ENCODE measurements at regions of chr11 and their contacts with region 1.

Region 1: DNA sequence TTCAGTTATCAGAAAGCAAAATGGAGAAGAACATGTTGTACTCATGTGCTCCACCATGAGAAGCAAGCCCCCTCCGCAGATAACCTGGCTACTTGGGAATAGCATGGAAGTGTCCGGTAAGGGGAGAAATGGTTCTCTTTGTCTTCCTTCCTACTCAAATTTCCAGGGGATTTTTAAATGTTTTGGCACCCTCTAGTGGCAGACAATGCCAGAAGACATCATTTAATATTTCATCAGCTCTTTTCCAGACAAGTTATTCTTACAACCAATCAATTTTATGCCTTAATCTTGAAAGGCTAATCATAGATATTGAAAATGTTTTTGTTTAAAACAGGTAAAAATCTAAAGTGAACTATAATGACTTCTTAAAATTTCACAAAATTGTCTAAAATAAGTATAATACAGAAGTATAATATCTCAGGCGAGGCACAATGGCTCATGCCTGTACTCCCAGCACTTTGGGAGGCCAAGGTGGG is 15.7 kb downstream of the CRTAM start:
- DNase-seq: peak; percentile 36 to 69 (median 46)
- ATAC-seq: peak; percentile 80
- H3K4me3 ChIP-seq: no peak overlapping the region
- H3K27ac ChIP-seq: no peak overlapping the region
- H3K4me1 ChIP-seq: no peaks in the 10 kb centered on the region; a peak in 1 of 5 replicates
- H3K27me3 ChIP-seq: no peaks in the 10 kb centered on the region; a peak in 2 of 5 replicates
- CTCF ChIP-seq: peak; percentile 45 to 81 (median 50); a peak in 5 of 6 replicates
- EP300 ChIP-seq: no peak
- POLR2A ChIP-seq: no peak
- RAD21 ChIP-seq: peak; percentile 39 to 76

Region 2: DNA sequence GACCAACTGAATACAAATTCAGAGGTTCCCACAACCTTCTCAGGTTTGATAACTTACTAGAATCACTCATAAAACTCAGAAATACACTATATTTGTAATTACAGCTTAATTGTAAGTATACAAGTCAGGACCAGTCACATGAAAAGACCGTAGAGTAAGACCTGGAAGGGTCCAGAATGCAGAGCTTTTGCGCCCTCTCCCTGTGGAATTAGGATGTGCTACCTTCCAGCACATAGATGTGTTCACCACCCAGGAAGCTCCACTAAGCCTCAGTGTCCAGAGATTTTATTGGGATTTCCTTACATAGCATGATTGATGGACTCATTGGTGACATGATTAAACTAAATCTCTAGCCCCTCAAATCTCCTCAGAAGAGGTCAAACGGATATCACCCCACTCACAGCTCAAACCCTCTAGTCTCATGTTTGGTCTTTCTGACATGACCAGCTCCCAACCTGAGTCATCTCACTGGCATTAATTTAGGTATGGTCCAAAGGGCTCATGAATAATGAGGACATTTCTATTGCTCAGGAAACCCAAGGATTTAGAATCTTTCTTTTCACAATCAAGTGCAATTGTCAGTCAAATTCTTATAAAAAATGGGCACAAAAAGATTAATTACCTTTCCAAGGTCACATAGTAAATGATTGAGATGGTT is 275.7 kb before region 1 on chr11:
- CTCF ChIA-PET with region 1: interaction called, 11 read pairs
- POLR2A ChIA-PET with region 1: no interaction called
- in situ Hi-C with region 1: no loop called
- intact Hi-C with region 1: loop called (anchors 1 kb)
- DNase-seq: peak in 1 of 4 experiments; percentile 23
- ATAC-seq: peak; percentile 84
- H3K4me3 ChIP-seq: no peak overlapping the region
- H3K27ac ChIP-seq: no peak overlapping the region
- H3K4me1 ChIP-seq: no peaks in the 10 kb centered on the region
- H3K27me3 ChIP-seq: no peaks in the 10 kb centered on the region
- CTCF ChIP-seq: peak; percentile 31 to 46 (median 36); a peak in 3 of 6 replicates
- EP300 ChIP-seq: no peak
- POLR2A ChIP-seq: no peak
- RAD21 ChIP-seq: peak in 1 of 2 experiments; percentile 30; a peak in 1 of 4 replicates

Region 3: DNA sequence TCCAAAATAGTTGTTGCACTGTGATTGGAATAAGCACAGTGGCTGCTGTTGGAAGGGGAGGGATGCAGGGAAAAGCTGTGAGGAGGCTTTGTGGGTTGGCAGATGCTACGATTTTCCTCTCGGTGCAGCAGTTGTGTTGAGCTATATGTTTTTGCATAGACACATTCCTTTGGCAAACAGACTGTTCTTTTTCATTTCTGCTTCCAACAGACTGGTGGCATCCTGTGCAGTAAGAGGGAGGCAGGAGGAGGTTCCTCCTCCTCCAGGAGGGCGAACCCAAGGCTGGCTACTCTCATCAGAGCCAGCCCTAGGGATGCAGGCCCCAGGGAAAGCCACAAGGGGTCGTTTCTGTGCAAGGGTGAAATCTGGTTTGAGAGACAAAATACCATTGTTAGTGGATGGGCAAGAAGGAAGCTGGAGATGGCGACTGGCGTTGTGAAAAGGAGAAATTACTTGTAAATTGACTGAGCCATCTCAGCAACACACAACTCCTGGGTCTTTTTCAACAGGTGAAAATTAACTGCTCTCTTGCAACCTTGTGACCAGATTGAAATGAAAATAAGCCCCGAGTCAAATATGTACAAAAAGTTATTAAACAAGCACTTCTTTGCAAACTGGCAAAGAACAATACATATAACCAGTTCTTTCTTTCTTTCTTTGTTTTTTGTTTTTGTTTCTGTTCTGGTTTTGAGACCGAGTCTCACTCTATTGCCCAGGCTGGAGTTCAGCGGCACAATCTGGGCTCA is 225.0 kb before region 1 on chr11:
- CTCF ChIA-PET with region 1: interaction called, 7 read pairs
- POLR2A ChIA-PET with region 1: no interaction called
- in situ Hi-C with region 1: no loop called
- intact Hi-C with region 1: loop called (anchors 2 kb)
- DNase-seq: peak; percentile 37 to 59 (median 46)
- ATAC-seq: peak; percentile 93
- H3K4me3 ChIP-seq: no peak overlapping the region
- H3K27ac ChIP-seq: no peak overlapping the region
- H3K4me1 ChIP-seq: no peaks in the 10 kb centered on the region
- H3K27me3 ChIP-seq: peaks cover 0 to 4% of the 10 kb centered on the region in 2 experiments; a peak in 1 of 5 replicates
- CTCF ChIP-seq: peak; percentile 71 to 75 (median 74)
- EP300 ChIP-seq: no peak
- POLR2A ChIP-seq: no peak
- RAD21 ChIP-seq: peak; percentile 44 to 61

Region 4: DNA sequence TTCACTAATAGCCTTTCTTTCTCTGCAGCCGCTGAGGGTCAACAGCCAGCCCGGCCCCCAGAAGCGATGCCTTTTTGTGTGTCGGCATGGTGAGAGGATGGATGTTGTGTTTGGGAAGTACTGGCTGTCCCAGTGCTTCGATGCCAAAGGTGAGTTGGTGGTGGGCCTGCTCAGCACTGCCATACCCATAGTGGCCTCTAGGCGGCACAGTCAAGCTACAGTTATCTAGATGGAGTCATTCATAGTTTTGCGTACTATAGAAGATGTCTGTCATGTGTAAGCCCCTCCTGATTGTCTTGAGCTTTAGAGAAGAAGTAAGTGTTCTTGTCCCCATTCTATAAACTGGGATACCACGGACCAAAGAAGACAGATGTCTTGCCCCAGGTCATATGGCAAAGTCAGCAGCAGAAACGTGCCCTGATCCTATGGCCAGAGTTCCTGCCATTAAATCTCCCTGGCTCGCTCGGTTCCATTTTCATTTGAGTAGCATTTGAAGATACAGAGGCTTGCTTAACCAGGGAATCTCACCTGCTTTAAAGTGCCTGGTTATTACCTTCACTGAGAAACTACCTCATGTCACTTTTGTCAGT is 57.8 kb before region 1 on chr11:
- CTCF ChIA-PET with region 1: no interaction called
- POLR2A ChIA-PET with region 1: no interaction called
- in situ Hi-C with region 1: no loop called
- intact Hi-C with region 1: loop called (anchors 5 kb)
- DNase-seq: peak; percentile 37 to 68 (median 52)
- ATAC-seq: peak; percentile 90
- H3K4me3 ChIP-seq: no peak overlapping the region
- H3K27ac ChIP-seq: no peak overlapping the region
- H3K4me1 ChIP-seq: no peaks in the 10 kb centered on the region
- H3K27me3 ChIP-seq: peaks cover 0 to 3% of the 10 kb centered on the region in 2 experiments; a peak in 2 of 5 replicates
- CTCF ChIP-seq: peak; percentile 54 to 80 (median 69)
- EP300 ChIP-seq: no peak
- POLR2A ChIP-seq: no peak
- RAD21 ChIP-seq: no peak; a peak in 1 of 4 replicates

Region 5: GRCh38 chr11:122951211-122951610 is 97.2 kb after region 1 on chr11:
- CTCF ChIA-PET with region 1: no interaction called
- POLR2A ChIA-PET with region 1: no interaction called
- in situ Hi-C with region 1: no loop called
- intact Hi-C with region 1: no loop called
- DNase-seq: no peak
- ATAC-seq: no peak
- H3K4me3 ChIP-seq: no peak overlapping the region
- H3K27ac ChIP-seq: no peak overlapping the region
- H3K4me1 ChIP-seq: no peaks in the 10 kb centered on the region
- H3K27me3 ChIP-seq: peaks cover 0 to 6% of the 10 kb centered on the region in 2 experiments; a peak in 2 of 5 replicates
- CTCF ChIP-seq: no peak
- EP300 ChIP-seq: no peak
- POLR2A ChIP-seq: no peak
- RAD21 ChIP-seq: no peak